Caco-2 (cell line): ENCODE measurements at regions of chr11 and their contacts with region 1.

Region 1: DNA sequence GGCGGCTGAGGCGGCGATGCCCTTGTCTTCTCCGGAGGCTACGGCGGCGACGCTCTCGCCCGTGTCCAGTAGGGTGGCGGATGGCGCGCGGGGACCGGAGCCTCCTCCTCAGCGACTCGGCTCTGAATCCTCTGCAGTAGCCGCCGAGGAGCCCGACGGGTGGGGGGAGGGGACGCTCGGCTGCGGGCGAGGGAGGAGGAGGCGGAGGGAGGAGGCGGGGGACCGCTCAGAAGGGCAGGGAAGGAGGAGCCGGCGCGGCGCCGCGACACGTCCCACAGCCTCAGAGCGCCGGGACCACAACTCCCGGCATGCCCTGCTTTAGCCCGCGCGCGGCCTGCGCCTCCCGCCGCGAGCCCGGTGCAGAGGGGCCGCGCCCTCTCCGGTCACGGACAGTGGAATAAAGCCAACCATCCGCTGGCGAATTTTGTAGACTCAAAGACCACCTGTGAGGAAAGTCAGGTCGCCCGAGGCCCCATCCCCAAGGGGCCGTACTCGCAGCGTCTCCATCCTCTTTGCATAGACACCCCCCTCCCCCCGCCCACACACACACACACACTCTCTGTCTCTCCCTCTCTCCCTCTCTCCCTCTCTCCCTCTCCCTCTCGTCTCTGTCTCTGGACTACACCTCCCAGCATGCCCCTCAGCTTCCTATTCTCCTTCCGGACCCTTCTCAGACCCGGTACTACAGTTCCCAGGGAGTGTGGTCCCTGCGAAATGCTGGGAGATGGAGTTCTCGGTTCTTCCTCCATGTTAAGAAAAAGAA is at the start of gene FAM168A:
- DNase-seq: peak; percentile 98 to 99
- H3K4me3 ChIP-seq: peak within 1 kb of the TSS; percentile 88
- H3K4me3 Mint-ChIP-seq: peak within 1 kb of the TSS; percentile 87
- H3K27ac Mint-ChIP-seq: peak within 1 kb of the TSS; percentile 74
- H3K4me1 ChIP-seq: 0 out of 2 replicates have a peak, but pooled peaks cover 5% of the 10 kb centered on the region
- H3K4me1 Mint-ChIP-seq: peaks cover 20% of the 10 kb centered on the region
- H3K27me3 ChIP-seq: no peaks in the 10 kb centered on the region
- H3K27me3 Mint-ChIP-seq: no peaks in the 10 kb centered on the region
- CTCF ChIP-seq: peak; percentile 46 to 53
- total RNA-seq, gene FAM168A: 46.0 and 50.2 TPM in 2 replicates

Region 2: DNA sequence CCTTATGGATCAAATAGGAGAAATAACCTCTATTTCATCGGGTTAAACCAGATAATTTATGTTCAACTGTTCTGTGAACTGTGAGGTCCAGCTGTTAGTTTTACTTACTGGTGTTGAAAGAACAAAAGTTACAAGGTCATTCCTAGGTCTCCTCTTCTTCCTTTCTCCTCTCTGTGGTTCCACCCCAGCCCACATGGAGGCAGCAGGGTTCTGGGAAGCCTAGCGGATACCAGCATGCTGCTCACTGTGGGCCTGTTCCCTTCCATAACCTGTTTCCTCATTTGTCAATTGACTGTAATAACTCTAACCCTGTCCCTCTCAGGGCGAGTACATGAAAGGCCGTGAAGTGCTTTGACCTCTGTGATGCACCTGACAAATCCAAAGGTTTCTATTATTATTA is 194.1 kb before region 1 on chr11:
- CTCF ChIA-PET with region 1: no interaction called
- POLR2A ChIA-PET with region 1: no interaction called
- intact Hi-C with region 1: loop called (anchors 10 kb)
- DNase-seq: peak; percentile 81 to 85
- H3K4me3 ChIP-seq: no peak overlapping the region
- H3K4me3 Mint-ChIP-seq: no peak overlapping the region
- H3K27ac Mint-ChIP-seq: no peak overlapping the region
- H3K4me1 ChIP-seq: no peaks in the 10 kb centered on the region
- H3K4me1 Mint-ChIP-seq: no peaks in the 10 kb centered on the region
- H3K27me3 ChIP-seq: no peaks in the 10 kb centered on the region
- H3K27me3 Mint-ChIP-seq: no peaks in the 10 kb centered on the region
- CTCF ChIP-seq: peak; percentile 71 to 93

Region 3: GRCh38 chr11:73429121-73429750 is 168.9 kb before region 1 on chr11:
- CTCF ChIA-PET with region 1: no interaction called
- POLR2A ChIA-PET with region 1: no interaction called
- intact Hi-C with region 1: no loop called
- DNase-seq: no peak
- H3K4me3 ChIP-seq: no peak overlapping the region
- H3K4me3 Mint-ChIP-seq: no peak overlapping the region
- H3K27ac Mint-ChIP-seq: no peak overlapping the region
- H3K4me1 ChIP-seq: no peaks in the 10 kb centered on the region
- H3K4me1 Mint-ChIP-seq: no peaks in the 10 kb centered on the region
- H3K27me3 ChIP-seq: no peaks in the 10 kb centered on the region
- H3K27me3 Mint-ChIP-seq: no peaks in the 10 kb centered on the region
- CTCF ChIP-seq: no peak

Region 4: GRCh38 chr11:73478738-73479347 is 119.3 kb before region 1 on chr11:
- CTCF ChIA-PET with region 1: interaction called, 9 read pairs
- POLR2A ChIA-PET with region 1: no interaction called
- intact Hi-C with region 1: loop called (anchors 1 kb)
- DNase-seq: peak in 1 of 2 experiments; percentile 63
- H3K4me3 ChIP-seq: no peak overlapping the region
- H3K4me3 Mint-ChIP-seq: no peak overlapping the region
- H3K27ac Mint-ChIP-seq: no peak overlapping the region
- H3K4me1 ChIP-seq: peaks cover 5% of the 10 kb centered on the region; the same call in 1 of the 2 replicates
- H3K4me1 Mint-ChIP-seq: peaks cover 6% of the 10 kb centered on the region
- H3K27me3 ChIP-seq: no peaks in the 10 kb centered on the region
- H3K27me3 Mint-ChIP-seq: no peaks in the 10 kb centered on the region
- CTCF ChIP-seq: peak; percentile 95 to 98

Region 5: GRCh38 chr11:73493956-73494598 is 104.1 kb before region 1 on chr11:
- CTCF ChIA-PET with region 1: no interaction called
- POLR2A ChIA-PET with region 1: no interaction called
- intact Hi-C with region 1: no loop called
- DNase-seq: peak in 1 of 2 experiments; percentile 30
- H3K4me3 ChIP-seq: no peak overlapping the region
- H3K4me3 Mint-ChIP-seq: no peak overlapping the region
- H3K27ac Mint-ChIP-seq: peak overlapping the region; percentile 3
- H3K4me1 ChIP-seq: 0 out of 2 replicates have a peak, but pooled peaks cover 6% of the 10 kb centered on the region
- H3K4me1 Mint-ChIP-seq: peaks cover 7% of the 10 kb centered on the region
- H3K27me3 ChIP-seq: no peaks in the 10 kb centered on the region
- H3K27me3 Mint-ChIP-seq: no peaks in the 10 kb centered on the region
- CTCF ChIP-seq: no peak

Region 6: GRCh38 chr11:73647459-73648100 is 49.4 kb after region 1 on chr11:
- CTCF ChIA-PET with region 1: no interaction called
- POLR2A ChIA-PET with region 1: no interaction called
- intact Hi-C with region 1: loop called (anchors 1 kb)
- DNase-seq: peak; percentile 94 to 95
- H3K4me3 ChIP-seq: peak overlapping the region; percentile 40
- H3K4me3 Mint-ChIP-seq: peak overlapping the region; percentile 78
- H3K27ac Mint-ChIP-seq: peak overlapping the region; percentile 36
- H3K4me1 ChIP-seq: peaks cover 10% of the 10 kb centered on the region; the same call in 1 of the 2 replicates
- H3K4me1 Mint-ChIP-seq: peaks cover 25% of the 10 kb centered on the region
- H3K27me3 ChIP-seq: no peaks in the 10 kb centered on the region
- H3K27me3 Mint-ChIP-seq: no peaks in the 10 kb centered on the region
- CTCF ChIP-seq: no peak

Region 7: DNA sequence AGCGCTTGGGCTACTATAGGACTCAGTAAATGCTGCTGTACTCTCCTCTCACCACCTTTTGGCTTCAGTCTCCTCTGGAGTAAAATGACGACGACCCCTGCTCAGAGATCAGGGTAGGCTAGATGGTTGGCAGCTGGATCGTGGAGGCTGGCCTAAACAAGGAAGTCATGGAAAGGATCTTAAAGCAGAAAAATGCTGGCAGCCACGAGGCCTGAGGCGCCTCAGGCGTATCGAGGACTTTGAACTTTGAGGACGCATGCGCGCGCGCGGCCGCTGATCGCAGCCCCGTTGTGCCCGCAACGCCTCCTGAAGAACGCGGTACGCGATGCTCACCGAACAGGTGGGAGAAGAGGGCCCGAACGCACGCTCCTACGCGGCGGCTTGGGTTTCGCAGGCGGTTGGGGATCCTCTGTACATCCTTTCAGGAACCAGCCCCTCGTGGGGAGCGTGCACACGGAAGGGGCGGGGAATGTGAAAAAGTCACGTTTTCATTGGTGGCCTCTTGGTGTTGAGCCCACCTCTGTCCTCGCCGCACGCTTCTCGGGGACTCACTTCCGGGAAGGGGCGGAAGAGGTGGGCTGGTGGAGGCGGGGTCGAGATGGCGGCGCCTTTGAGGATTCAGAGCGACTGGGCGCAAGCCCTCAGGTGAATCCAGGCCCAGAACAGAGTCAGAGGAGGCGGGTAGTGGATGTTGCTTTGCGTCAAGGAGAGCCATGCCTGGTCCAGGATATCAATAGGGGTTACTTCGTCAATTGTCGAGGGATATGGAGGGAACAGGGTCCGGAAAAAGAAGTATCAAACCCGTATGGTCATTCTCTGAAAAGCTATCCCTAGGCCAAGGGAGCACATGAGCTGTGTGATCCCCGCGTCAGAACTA is 278.5 kb after region 1 on chr11 and contains the starts of genes COA4 and PAAF1:
- CTCF ChIA-PET with region 1: no interaction called
- POLR2A ChIA-PET with region 1: no interaction called
- intact Hi-C with region 1: loop called (anchors 1 kb)
- DNase-seq: peak; percentile 100
- H3K4me3 ChIP-seq: peak within 1 kb of the TSS; percentile 62
- H3K4me3 Mint-ChIP-seq: peak within 1 kb of the TSS; percentile 91
- H3K27ac Mint-ChIP-seq: peak within 1 kb of the TSS; percentile 95
- H3K4me1 ChIP-seq: peaks cover 23% of the 10 kb centered on the region
- H3K4me1 Mint-ChIP-seq: peaks cover 6% of the 10 kb centered on the region
- H3K27me3 ChIP-seq: no peaks in the 10 kb centered on the region
- H3K27me3 Mint-ChIP-seq: no peaks in the 10 kb centered on the region
- CTCF ChIP-seq: no peak
- total RNA-seq, gene COA4: 127 and 137 TPM in 2 replicates
- total RNA-seq, gene PAAF1: 51.6 and 53.4 TPM in 2 replicates

Region 8: DNA sequence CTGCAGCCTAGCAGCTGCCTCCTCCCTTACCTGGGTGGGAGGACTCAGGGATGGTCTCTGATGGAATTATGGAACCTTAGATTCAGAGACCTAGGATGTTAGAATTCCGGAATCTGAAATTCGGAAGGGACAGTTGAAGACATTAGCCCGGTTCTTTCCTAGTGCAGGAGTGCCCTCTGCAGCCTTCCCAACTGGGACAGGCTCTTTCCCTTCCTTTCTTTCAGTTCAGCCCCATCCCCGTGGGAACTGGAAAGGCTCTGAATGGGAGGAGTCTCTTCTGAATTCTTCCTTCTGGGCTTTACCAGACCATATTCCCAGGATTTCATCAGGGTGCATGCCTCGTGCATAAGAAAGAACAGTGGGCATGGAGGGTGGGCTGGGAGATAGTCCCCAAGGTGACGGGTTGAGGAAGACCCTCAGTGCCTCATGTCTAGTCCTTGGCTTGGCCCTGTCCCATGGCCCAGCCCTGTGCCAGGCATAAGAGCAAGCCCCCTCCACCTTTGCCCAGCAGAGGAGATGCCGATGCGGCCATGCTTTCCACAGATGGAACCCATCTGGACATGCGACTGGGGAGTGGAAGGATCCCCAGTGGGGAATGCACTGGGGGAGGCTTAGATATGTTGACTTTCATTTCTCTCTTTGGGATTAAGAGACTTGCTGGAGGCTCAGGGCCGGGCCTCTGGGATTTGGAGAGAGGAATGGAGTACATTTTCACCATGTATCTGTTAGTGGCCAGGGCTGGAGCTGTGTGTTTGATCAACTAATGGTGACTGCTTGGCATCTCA is 367.1 kb after region 1 on chr11:
- CTCF ChIA-PET with region 1: no interaction called
- POLR2A ChIA-PET with region 1: no interaction called
- intact Hi-C with region 1: no loop called
- DNase-seq: peak; percentile 36 to 37
- H3K4me3 ChIP-seq: no peak overlapping the region
- H3K4me3 Mint-ChIP-seq: no peak overlapping the region
- H3K27ac Mint-ChIP-seq: no peak overlapping the region
- H3K4me1 ChIP-seq: no peaks in the 10 kb centered on the region
- H3K4me1 Mint-ChIP-seq: no peaks in the 10 kb centered on the region
- H3K27me3 ChIP-seq: no peaks in the 10 kb centered on the region; the same call in 1 of the 2 replicates
- H3K27me3 Mint-ChIP-seq: no peaks in the 10 kb centered on the region
- CTCF ChIP-seq: no peak

Region 9: GRCh38 chr11:74085542-74085892 is 487.4 kb after region 1 on chr11:
- CTCF ChIA-PET with region 1: no interaction called
- POLR2A ChIA-PET with region 1: no interaction called
- intact Hi-C with region 1: no loop called
- DNase-seq: no peak
- H3K4me3 ChIP-seq: no peak overlapping the region
- H3K4me3 Mint-ChIP-seq: peak overlapping the region; percentile 1
- H3K27ac Mint-ChIP-seq: peak overlapping the region; percentile 47
- H3K4me1 ChIP-seq: peaks cover 18% of the 10 kb centered on the region
- H3K4me1 Mint-ChIP-seq: peaks cover 15% of the 10 kb centered on the region
- H3K27me3 ChIP-seq: no peaks in the 10 kb centered on the region
- H3K27me3 Mint-ChIP-seq: no peaks in the 10 kb centered on the region
- CTCF ChIP-seq: no peak